ENCODE measurements at regions of chr17 and their contacts with region 1.

Region 1: DNA sequence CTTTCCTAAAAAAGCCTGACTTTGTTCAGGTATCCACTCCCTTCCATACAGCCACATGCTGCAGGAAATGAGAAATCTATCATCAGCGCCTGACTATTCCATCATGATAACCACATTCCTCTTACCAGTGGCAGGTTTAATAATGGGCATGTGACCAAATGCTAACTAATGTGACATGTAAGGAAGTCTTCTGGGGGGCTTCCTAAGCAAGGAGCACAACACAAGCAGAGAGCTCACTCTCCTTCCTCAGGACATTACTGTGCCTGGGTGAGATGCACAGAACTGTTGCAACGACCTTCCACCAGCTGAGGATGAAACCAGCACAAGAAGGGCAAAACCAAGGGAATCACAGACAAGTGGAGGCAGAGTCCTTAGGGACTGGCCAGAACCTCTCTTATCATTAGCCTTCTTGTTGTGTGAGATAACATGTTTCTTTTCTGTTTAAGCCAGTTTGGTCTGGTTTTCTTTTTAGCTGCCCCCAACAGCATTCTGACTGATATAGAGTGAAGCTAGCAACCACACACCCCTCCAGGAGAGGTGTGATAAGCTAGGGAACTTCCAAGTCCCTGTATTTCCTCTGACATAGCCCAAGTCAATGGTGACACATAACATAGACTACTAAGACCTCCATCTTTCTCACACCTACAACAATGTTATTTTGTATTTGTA is 16.9 kb downstream of the MYO1D start:
- DNase-seq: no peak

Region 2: GRCh38 chr17:32627239-32627996 is 232.6 kb before region 1 on chr17:
- intact Hi-C with region 1: no loop called
- DNase-seq: peak; percentile 46 to 92 (median 69)

Region 3: DNA sequence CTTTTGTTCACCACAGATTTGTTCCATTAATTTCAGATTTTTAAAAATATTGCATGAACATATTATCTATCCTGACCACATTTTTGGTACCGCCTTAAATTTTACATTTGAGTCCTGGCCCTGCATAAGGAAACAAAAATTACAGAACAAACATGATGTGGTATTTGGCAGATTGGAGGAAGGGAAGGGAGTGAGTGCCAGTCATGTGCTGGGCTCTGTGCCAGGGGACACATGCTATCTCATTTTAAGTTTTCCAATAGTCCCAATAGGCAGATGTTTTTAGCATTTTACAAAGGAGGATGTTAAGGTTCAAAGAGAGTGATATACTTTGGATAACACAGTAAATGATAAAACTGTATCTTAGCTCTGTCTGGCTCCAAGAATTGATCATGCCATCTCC is 188.1 kb before region 1 on chr17:
- intact Hi-C with region 1: no loop called
- DNase-seq: no peak

Region 4: DNA sequence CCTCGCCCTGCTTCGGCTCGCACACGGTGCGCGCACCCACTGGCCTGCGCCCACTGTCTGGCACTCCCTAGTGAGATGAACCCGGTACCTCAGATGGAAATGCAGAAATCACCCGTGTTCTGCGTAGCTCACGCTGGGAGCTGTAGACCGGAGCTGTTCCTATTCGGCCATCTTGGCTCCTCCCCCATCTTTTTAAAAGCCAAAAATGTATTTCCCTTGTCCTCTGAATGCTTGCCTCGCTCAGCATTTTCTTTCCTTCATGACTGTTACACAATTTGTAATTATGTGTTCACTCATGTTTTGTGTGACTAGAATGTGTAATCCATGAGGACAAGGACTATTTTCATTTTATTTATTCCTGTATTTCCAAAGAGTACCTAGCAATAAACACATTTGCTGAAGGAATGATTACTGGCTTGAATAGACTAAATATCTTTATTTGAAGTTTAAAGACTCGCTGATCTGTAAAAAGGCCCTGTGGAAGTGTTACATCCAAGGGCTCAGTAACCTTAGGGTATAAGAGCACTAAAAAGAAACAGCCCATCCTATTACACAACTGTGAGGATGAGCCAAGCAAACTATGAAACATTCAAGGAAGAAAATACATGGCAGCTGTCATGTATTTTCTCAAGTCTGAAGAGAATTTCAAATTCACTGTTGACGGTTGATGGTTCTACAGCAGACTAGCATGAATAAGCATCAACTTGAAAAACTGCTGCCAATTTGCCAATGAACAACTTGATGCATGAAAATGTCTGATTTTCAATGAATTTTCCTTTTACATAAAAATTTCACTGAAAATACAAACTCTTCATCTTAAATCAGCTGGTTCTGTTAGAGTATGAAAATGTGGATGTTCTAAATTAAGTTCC is 175.7 kb before region 1 on chr17:
- intact Hi-C with region 1: no loop called
- DNase-seq: no peak

Region 5: GRCh38 chr17:32794533-32795246 is 65.3 kb before region 1 on chr17:
- intact Hi-C with region 1: loop called (anchors 5 kb)
- DNase-seq: no peak

Measured in posterior cingulate gyrus (tissue), 11 donors.